B cell (primary cell): ENCODE measurements at regions of chr5 and their contacts with region 1.

Region 1: GRCh38 chr5:61162010-61162831 is at the start of gene SMIM15:
- DNase-seq: peak; percentile 87
- ATAC-seq: peak; percentile 90
- H3K4me3 ChIP-seq: peak within 1 kb of the TSS; percentile 86 to 96 (median 92)
- H3K4me3 Mint-ChIP-seq: peak within 1 kb of the TSS; percentile 97
- H3K27ac ChIP-seq: peak within 1 kb of the TSS; percentile 86 to 88
- H3K27ac Mint-ChIP-seq: peak within 1 kb of the TSS; percentile 97
- H3K4me1 ChIP-seq: peaks cover 18 to 20% of the 10 kb centered on the region in 2 donors
- H3K4me1 Mint-ChIP-seq: peaks cover 38% of the 10 kb centered on the region
- H3K27me3 ChIP-seq: no peaks in the 10 kb centered on the region
- H3K27me3 Mint-ChIP-seq: no peaks in the 10 kb centered on the region
- CTCF ChIP-seq: no peak
- total RNA-seq, gene SMIM15: 28.7 and 29.8 TPM in 2 replicates

Region 2: GRCh38 chr5:60487885-60488442 is 674.3 kb before region 1 on chr5:
- CTCF ChIA-PET with region 1: no interaction called
- POLR2A ChIA-PET with region 1: no interaction called
- intact Hi-C with region 1: no loop called
- DNase-seq: no peak
- ATAC-seq: no peak
- H3K4me3 ChIP-seq: no peak overlapping the region
- H3K4me3 Mint-ChIP-seq: no peak overlapping the region
- H3K27ac ChIP-seq: no peak overlapping the region
- H3K27ac Mint-ChIP-seq: no peak overlapping the region
- H3K4me1 ChIP-seq: no peaks in the 10 kb centered on the region
- H3K4me1 Mint-ChIP-seq: peaks cover 1% of the 10 kb centered on the region
- H3K27me3 ChIP-seq: no peaks in the 10 kb centered on the region
- H3K27me3 Mint-ChIP-seq: no peaks in the 10 kb centered on the region
- CTCF ChIP-seq: no peak

Region 3: GRCh38 chr5:61182449-61182848 is 20.2 kb after region 1 on chr5:
- CTCF ChIA-PET with region 1: no interaction called
- POLR2A ChIA-PET with region 1: no interaction called
- intact Hi-C with region 1: no loop called
- DNase-seq: no peak
- ATAC-seq: no peak
- H3K4me3 ChIP-seq: no peak overlapping the region
- H3K4me3 Mint-ChIP-seq: no peak overlapping the region
- H3K27ac ChIP-seq: no peak overlapping the region
- H3K27ac Mint-ChIP-seq: no peak overlapping the region
- H3K4me1 ChIP-seq: peaks cover 8 to 14% of the 10 kb centered on the region in 2 donors
- H3K4me1 Mint-ChIP-seq: peaks cover 24% of the 10 kb centered on the region
- H3K27me3 ChIP-seq: no peaks in the 10 kb centered on the region
- H3K27me3 Mint-ChIP-seq: no peaks in the 10 kb centered on the region
- CTCF ChIP-seq: no peak

Region 4: GRCh38 chr5:61408476-61409168 is 246.4 kb after region 1 on chr5:
- CTCF ChIA-PET with region 1: no interaction called
- POLR2A ChIA-PET with region 1: no interaction called
- intact Hi-C with region 1: loop called (anchors 5 kb)
- DNase-seq: peak; percentile 98
- ATAC-seq: peak; percentile 98
- H3K4me3 ChIP-seq: peak overlapping the region; percentile 34 to 58 (median 42)
- H3K4me3 Mint-ChIP-seq: peak overlapping the region; percentile 90
- H3K27ac ChIP-seq: peak overlapping the region in 1 of 2 donors; percentile 51
- H3K27ac Mint-ChIP-seq: peak overlapping the region; percentile 95
- H3K4me1 ChIP-seq: peaks cover 16 to 17% of the 10 kb centered on the region in 2 donors
- H3K4me1 Mint-ChIP-seq: peaks cover 35% of the 10 kb centered on the region
- H3K27me3 ChIP-seq: no peaks in the 10 kb centered on the region
- H3K27me3 Mint-ChIP-seq: no peaks in the 10 kb centered on the region
- CTCF ChIP-seq: no peak

Region 5: DNA sequence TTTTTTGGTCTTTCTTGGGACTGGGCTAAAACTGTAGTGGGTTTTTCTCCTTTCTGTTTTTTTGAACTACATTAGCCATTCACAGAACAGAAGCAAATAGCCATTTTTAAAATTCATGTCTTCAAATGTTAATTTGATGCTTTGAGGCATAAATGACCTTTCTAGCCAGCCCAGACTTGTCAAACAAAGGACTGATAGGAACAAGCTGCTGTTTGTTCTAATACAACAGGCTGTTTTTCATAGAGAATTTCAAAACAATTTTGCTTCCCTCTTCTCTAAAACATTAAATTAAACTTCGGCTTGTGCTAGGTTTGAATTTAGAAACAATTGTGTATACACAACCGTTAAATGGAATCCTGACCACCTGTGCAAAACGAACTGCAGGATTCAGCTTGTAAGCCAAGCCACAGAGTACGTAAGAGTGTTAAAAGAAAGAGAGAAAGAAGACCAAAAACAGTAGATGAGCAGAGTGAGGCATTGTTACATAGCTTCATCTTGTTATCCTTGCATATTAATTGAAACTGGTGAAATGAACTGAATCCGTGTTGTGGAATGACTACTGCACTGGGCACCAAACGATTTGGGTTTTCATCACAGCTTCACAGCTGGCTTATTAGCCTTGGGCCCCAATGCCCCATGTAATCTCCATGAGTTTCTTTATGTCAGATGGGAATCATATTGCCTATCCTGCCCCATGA is 269.9 kb after region 1 on chr5:
- CTCF ChIA-PET with region 1: no interaction called
- POLR2A ChIA-PET with region 1: no interaction called
- intact Hi-C with region 1: no loop called
- DNase-seq: no peak
- ATAC-seq: no peak
- H3K4me3 ChIP-seq: no peak overlapping the region
- H3K4me3 Mint-ChIP-seq: no peak overlapping the region
- H3K27ac ChIP-seq: no peak overlapping the region
- H3K27ac Mint-ChIP-seq: no peak overlapping the region
- H3K4me1 ChIP-seq: no peaks in the 10 kb centered on the region
- H3K4me1 Mint-ChIP-seq: peaks cover 28% of the 10 kb centered on the region
- H3K27me3 ChIP-seq: no peaks in the 10 kb centered on the region
- H3K27me3 Mint-ChIP-seq: no peaks in the 10 kb centered on the region
- CTCF ChIP-seq: no peak

Region 6: DNA sequence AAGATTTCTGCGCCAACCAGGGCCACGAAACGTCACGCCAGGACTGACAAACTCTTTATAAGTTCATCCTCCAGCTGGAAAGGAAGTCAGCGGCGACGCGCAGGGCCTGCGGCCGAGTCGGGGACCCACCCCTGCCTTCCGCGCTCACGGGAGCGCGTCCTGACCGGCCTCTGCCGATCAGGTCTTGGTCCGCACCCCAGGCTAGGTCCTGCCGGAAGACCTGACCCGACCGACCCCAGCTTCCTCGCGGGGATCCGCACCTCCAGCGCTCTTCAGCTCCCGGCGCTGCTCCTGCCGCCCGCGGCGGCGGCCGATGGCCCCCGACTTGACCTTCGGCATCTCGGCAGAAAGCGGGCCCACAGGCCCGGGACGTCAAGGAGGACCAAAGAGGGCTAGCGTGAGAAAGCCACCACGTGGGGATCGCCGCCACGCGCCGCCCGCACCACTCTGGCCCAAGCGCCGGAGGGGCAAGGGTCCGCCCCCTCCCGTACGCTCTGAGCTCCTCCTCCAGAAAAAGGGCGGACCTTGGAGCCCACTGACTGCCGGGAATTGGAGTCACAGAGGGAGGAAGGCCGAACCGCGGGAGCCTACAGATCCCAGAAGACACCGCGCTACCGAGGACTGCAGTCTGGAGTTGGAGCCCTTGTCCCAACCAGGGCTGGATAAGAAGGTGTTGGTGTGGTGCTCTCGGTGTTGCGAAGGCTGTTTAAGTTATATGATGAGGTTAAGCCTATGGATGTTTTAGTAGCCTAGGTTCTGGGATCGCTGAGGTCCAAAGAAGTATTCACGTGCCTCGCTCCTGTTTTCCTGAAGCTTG is 1241.4 kb after region 1 on chr5 and contains the start of gene DIMT1:
- CTCF ChIA-PET with region 1: no interaction called
- POLR2A ChIA-PET with region 1: no interaction called
- intact Hi-C with region 1: loop called (anchors 5 kb)
- DNase-seq: peak; percentile 93
- ATAC-seq: peak; percentile 99
- H3K4me3 ChIP-seq: peak within 1 kb of the TSS; percentile 92 to 98 (median 97)
- H3K4me3 Mint-ChIP-seq: peak within 1 kb of the TSS; percentile 100
- H3K27ac ChIP-seq: peak within 1 kb of the TSS; percentile 93 to 95
- H3K27ac Mint-ChIP-seq: peak within 1 kb of the TSS; percentile 87
- H3K4me1 ChIP-seq: peaks cover 5 to 16% of the 10 kb centered on the region in 2 donors
- H3K4me1 Mint-ChIP-seq: peaks cover 22% of the 10 kb centered on the region
- H3K27me3 ChIP-seq: no peaks in the 10 kb centered on the region
- H3K27me3 Mint-ChIP-seq: no peaks in the 10 kb centered on the region
- CTCF ChIP-seq: no peak
- total RNA-seq, gene DIMT1: 19.5 and 20.7 TPM in 2 replicates